B cell (primary cell): ENCODE measurements at regions of chr2 and their contacts with region 1.

Region 1: GRCh38 chr2:179264368-179265081 is at the start of gene SESTD1:
- DNase-seq: peak; percentile 83
- ATAC-seq: peak; percentile 79
- H3K4me3 ChIP-seq: peak within 1 kb of the TSS; percentile 62 to 96 (median 80)
- H3K4me3 Mint-ChIP-seq: peak within 1 kb of the TSS; percentile 92
- H3K27ac ChIP-seq: peak within 1 kb of the TSS; percentile 54 to 87
- H3K27ac Mint-ChIP-seq: peak within 1 kb of the TSS; percentile 91
- H3K4me1 ChIP-seq: peaks cover 24 to 45% of the 10 kb centered on the region in 2 donors
- H3K4me1 Mint-ChIP-seq: peaks cover 51% of the 10 kb centered on the region
- H3K27me3 ChIP-seq: no peaks in the 10 kb centered on the region
- H3K27me3 Mint-ChIP-seq: no peaks in the 10 kb centered on the region
- CTCF ChIP-seq: no peak
- total RNA-seq, gene SESTD1: 66.1 and 71.9 TPM in 2 replicates

Region 2: GRCh38 chr2:178962805-178963433 is 301.6 kb before region 1 on chr2:
- CTCF ChIA-PET with region 1: no interaction called
- POLR2A ChIA-PET with region 1: no interaction called
- intact Hi-C with region 1: no loop called
- DNase-seq: peak; percentile 35
- ATAC-seq: peak; percentile 76
- H3K4me3 ChIP-seq: no peak overlapping the region
- H3K4me3 Mint-ChIP-seq: no peak overlapping the region
- H3K27ac ChIP-seq: peak overlapping the region in 1 of 2 donors; percentile 41
- H3K27ac Mint-ChIP-seq: no peak overlapping the region
- H3K4me1 ChIP-seq: peaks cover 11 to 14% of the 10 kb centered on the region in 2 donors
- H3K4me1 Mint-ChIP-seq: peaks cover 8% of the 10 kb centered on the region
- H3K27me3 ChIP-seq: no peaks in the 10 kb centered on the region
- H3K27me3 Mint-ChIP-seq: no peaks in the 10 kb centered on the region
- CTCF ChIP-seq: no peak

Region 3: GRCh38 chr2:179285060-179285459 is 20.5 kb after region 1 on chr2:
- CTCF ChIA-PET with region 1: no interaction called
- POLR2A ChIA-PET with region 1: no interaction called
- intact Hi-C with region 1: no loop called
- DNase-seq: no peak
- ATAC-seq: no peak
- H3K4me3 ChIP-seq: no peak overlapping the region
- H3K4me3 Mint-ChIP-seq: no peak overlapping the region
- H3K27ac ChIP-seq: no peak overlapping the region
- H3K27ac Mint-ChIP-seq: no peak overlapping the region
- H3K4me1 ChIP-seq: no peaks in the 10 kb centered on the region
- H3K4me1 Mint-ChIP-seq: no peaks in the 10 kb centered on the region
- H3K27me3 ChIP-seq: no peaks in the 10 kb centered on the region
- H3K27me3 Mint-ChIP-seq: no peaks in the 10 kb centered on the region
- CTCF ChIP-seq: no peak

Region 4: GRCh38 chr2:179340668-179341067 is 76.1 kb after region 1 on chr2:
- CTCF ChIA-PET with region 1: no interaction called
- POLR2A ChIA-PET with region 1: interaction called, 4 read pairs
- intact Hi-C with region 1: loop called (anchors 5 kb)
- DNase-seq: peak; percentile 52
- ATAC-seq: peak; percentile 51
- H3K4me3 ChIP-seq: no peak overlapping the region
- H3K4me3 Mint-ChIP-seq: no peak overlapping the region
- H3K27ac ChIP-seq: no peak overlapping the region
- H3K27ac Mint-ChIP-seq: no peak overlapping the region
- H3K4me1 ChIP-seq: peaks cover 2 to 8% of the 10 kb centered on the region in 2 donors
- H3K4me1 Mint-ChIP-seq: peaks cover 11% of the 10 kb centered on the region
- H3K27me3 ChIP-seq: no peaks in the 10 kb centered on the region
- H3K27me3 Mint-ChIP-seq: no peaks in the 10 kb centered on the region
- CTCF ChIP-seq: peak; percentile 38